ENCODE measurements at regions of chr14 and their contacts with region 1.

Region 1: DNA sequence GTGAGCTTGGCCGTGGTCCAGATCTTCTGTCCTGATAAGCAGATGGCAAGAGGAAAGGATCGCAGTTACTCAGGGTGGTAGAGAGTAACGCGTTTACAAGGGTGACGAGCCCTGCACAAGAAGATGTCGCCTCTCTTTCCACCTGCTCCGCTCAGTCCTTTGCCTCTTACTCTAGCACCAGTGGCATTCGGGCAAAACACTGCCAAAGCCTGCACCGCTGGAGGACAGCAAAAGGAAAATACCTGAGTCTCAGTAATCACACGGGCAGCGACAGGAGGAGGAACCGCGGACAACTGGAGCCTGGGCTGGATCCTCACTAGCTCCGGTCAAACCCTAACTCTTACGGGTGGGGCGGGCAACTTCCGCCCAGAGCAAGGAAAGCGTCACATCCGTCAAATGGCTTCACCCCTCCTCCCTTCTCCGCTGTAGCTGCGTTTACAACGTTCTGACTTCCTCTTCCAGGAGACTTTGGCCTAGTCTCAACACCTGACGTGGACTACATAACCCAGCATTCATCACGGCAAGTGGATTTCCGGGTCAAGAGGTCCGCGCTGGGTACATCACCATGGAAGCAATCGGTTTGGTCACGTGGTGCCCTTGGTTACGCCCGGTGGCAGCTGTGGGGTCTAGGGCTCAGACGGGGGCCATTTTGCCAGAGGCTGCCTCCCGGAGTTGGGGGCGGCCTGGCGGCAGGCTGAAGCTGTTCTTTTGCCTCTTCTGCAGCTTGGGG is at the starts of genes KLHL28 and TOGARAM1:
- DNase-seq: peak; percentile 89 to 99
- ATAC-seq: peak; percentile 96 to 98 (median 96)
- H3K4me3 ChIP-seq: peak within 1 kb of the TSS; percentile 50 to 98 (median 84)
- H3K27ac ChIP-seq: peak within 1 kb of the TSS; percentile 79 to 96 (median 88)
- H3K4me1 ChIP-seq: peaks cover 0 to 78% (median 66%) of the 10 kb centered on the region in 9 donors
- H3K27me3 ChIP-seq: no peaks in the 10 kb centered on the region
- CTCF ChIP-seq: no peak
- total RNA-seq, gene KLHL28: 9.0 to 15.4 (median 13.0) TPM
- total RNA-seq, gene TOGARAM1: 14.7 to 25.2 (median 22.2) TPM

Region 2: GRCh38 chr14:44662250-44662891 is 299.4 kb before region 1 on chr14:
- intact Hi-C with region 1: no loop called
- DNase-seq: no peak
- ATAC-seq: no peak
- H3K4me3 ChIP-seq: no peak overlapping the region
- H3K27ac ChIP-seq: no peak overlapping the region
- H3K4me1 ChIP-seq: no peaks in the 10 kb centered on the region
- H3K27me3 ChIP-seq: no peaks in the 10 kb centered on the region
- CTCF ChIP-seq: no peak

Region 3: GRCh38 chr14:44833376-44834060 is 128.3 kb before region 1 on chr14:
- intact Hi-C with region 1: no loop called
- DNase-seq: no peak
- ATAC-seq: peak in 1 of 8 donors; percentile 31
- H3K4me3 ChIP-seq: no peak overlapping the region
- H3K27ac ChIP-seq: no peak overlapping the region
- H3K4me1 ChIP-seq: no peaks in the 10 kb centered on the region
- H3K27me3 ChIP-seq: no peaks in the 10 kb centered on the region
- CTCF ChIP-seq: no peak

Region 4: GRCh38 chr14:44897045-44897844 is 64.5 kb before region 1 on chr14:
- intact Hi-C with region 1: loop called in 3 of 10 experiments (anchors 2 to 5 kb)
- DNase-seq: peak; percentile 98
- ATAC-seq: peak; percentile 98 to 100 (median 99)
- H3K4me3 ChIP-seq: peak overlapping the region; percentile 67 to 96 (median 90)
- H3K27ac ChIP-seq: peak overlapping the region; percentile 96 to 100 (median 99)
- H3K4me1 ChIP-seq: peaks cover 0 to 30% (median 21%) of the 10 kb centered on the region in 9 donors
- H3K27me3 ChIP-seq: no peaks in the 10 kb centered on the region
- CTCF ChIP-seq: peak in 1 of 9 donors; percentile 21

Region 5: DNA sequence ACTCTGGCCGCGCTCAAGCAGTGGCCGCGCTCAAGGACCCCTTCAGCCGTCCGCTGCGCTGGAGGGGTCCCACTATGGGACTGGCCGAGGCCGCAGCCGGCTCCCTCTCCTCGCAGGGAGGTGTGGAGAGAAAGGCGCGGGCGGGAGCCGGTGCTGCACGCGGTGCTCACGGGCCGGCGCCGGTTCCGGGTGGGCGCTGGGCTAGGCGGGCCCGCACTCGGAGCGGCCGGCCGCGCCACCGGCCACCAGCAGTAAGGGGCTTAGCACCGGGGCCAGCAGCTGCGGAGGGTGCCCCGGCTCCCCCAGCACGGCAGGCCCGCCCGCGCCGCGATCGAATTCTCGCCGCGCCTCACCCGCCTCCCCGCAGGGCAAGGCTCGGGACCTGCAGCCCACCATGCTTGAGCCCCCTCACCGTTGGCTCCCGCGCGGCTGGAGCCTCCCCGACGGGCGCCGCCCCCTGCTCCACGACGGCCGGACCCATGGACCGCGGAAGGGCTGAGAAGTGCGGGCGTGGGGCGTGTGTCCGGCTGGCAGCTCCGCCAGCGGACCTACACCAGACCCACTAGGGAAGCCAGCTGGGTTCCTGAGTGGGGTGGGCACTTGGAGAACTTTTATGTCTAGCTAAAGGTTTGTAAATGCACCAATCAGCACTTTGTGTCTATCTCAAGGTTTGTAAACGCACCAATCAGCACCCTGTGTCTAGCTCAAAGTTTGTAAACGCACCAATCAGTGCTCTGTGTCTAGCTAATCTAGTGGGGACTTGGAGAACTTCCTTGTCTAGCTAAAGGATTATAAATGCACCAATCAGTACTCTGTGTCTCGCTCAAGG is 49.5 kb before region 1 on chr14:
- intact Hi-C with region 1: loop called in 1 of 10 experiments (anchors 5 kb)
- DNase-seq: peak; percentile 20
- ATAC-seq: peak; percentile 34 to 75 (median 52)
- H3K4me3 ChIP-seq: peak overlapping the region; percentile 33 to 66 (median 57)
- H3K27ac ChIP-seq: peak overlapping the region in 1 of 10 donors; percentile 40
- H3K4me1 ChIP-seq: peaks cover 0 to 22% (median 7%) of the 10 kb centered on the region in 9 donors
- H3K27me3 ChIP-seq: peaks cover 0 to 38% (median 0%) of the 10 kb centered on the region in 7 donors
- CTCF ChIP-seq: no peak

Region 6: DNA sequence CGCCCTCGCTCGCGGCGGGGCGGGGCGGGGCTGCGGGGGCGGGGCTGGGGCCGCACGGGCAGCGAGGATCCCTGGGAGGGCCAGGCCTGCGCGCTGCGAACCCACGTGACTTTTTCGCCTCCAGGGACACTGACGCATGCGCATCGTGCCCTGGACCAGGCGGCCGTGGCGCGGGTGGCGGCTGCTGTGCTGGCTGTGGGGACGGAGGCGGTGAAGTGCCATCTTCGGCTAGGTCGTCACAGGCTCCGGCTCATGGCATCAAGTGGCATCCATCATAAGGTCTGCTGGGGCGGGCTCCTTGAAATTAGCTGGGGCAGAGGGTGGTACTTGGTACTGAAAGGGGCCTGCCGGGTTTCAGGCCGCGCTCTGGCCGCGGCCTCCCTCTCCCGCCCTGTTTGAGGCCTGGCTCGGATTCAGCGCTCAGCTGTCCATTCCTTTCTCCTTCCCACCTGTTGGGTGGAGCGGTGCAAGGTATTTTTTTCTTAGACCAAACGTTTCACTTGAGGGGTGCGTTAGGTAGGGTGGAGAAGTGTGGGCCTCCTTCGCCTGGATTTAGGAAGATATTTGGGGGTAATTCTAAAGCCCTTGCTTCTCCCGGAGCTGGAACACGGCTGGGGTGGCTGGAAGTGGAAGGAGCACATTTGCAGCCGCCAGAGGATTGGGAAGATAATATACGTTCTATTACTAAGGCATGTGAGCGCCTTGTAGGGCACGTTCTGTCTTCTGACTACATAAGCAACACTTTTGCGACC is 122.4 kb after region 1 on chr14 and contains the start of gene PRPF39:
- intact Hi-C with region 1: loop called in 4 of 10 experiments (anchors 5 to 10 kb)
- DNase-seq: peak; percentile 94 to 96
- ATAC-seq: peak; percentile 99 to 100 (median 100)
- H3K4me3 ChIP-seq: peak within 1 kb of the TSS; percentile 63 to 89 (median 74)
- H3K27ac ChIP-seq: peak within 1 kb of the TSS; percentile 35 to 91 (median 78)
- H3K4me1 ChIP-seq: peaks cover 0 to 53% (median 40%) of the 10 kb centered on the region in 9 donors
- H3K27me3 ChIP-seq: no peaks in the 10 kb centered on the region
- CTCF ChIP-seq: no peak
- total RNA-seq, gene PRPF39: 9.5 to 18.8 (median 13.4) TPM

Region 7: DNA sequence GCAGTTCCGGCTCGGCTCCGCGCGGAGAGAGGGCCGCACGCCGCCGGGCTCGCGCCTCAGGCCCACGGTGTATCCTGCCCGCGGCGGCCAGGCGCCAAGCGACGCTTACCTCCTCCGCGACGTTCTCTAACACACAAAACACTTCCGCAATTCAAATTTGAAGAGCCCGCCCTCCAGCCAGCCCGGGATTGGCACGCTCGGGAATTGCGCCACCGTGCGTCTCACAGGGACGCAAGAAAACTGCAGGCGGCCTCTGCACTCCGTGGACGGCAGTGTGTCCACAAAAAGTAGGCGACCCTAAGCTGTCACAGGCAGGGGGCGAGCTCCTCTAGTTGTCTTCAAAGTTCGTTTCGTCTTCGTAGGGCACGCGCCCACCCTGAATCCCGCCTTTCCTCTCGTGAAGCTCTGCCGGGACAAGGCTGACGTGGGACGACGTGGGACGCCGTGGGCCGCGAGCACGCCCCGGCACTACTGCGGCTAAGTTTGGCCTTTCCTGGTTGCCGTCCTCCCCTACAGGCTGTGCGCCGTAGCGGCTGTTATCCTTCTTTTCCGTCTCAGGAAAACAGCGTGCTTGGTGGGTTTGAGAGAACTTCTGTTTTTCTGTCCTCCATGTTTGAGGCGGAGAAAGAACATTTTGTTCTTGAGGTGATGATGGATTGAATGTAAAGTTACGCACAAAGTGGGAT is 291.4 kb after region 1 on chr14 and contains the start of gene MIS18BP1:
- intact Hi-C with region 1: loop called in 3 of 10 experiments (anchors 5 to 10 kb)
- DNase-seq: peak; percentile 94 to 97
- ATAC-seq: peak; percentile 95 to 99 (median 97)
- H3K4me3 ChIP-seq: peak within 1 kb of the TSS; percentile 54 to 90 (median 76)
- H3K27ac ChIP-seq: peak within 1 kb of the TSS; percentile 89 to 97 (median 92)
- H3K4me1 ChIP-seq: peaks cover 0 to 47% (median 36%) of the 10 kb centered on the region in 9 donors
- H3K27me3 ChIP-seq: no peaks in the 10 kb centered on the region
- CTCF ChIP-seq: peak; percentile 62 to 98 (median 85)
- total RNA-seq, gene MIS18BP1: 4.7 to 11.2 (median 8.1) TPM

Measured in heart right ventricle (tissue), 16 donors.